ENCODE measurements at regions of chr16 and their contacts with region 1.

Region 1: GRCh38 chr16:69598045-69598444 is 32.3 kb downstream of the NFAT5 start:
- H3K4me3 ChIP-seq: no peak overlapping the region
- H3K27ac ChIP-seq: no peak overlapping the region
- H3K4me1 ChIP-seq: 0 out of 2 replicates have a peak, but pooled peaks cover 3% of the 10 kb centered on the region
- CTCF ChIP-seq: no peak

Region 2: GRCh38 chr16:69610356-69610755 is 12.3 kb after region 1 on chr16:
- CTCF ChIA-PET with region 1: no interaction called
- POLR2A ChIA-PET with region 1: no interaction called
- H3K4me3 ChIP-seq: no peak overlapping the region
- H3K27ac ChIP-seq: no peak overlapping the region
- H3K4me1 ChIP-seq: peaks cover 25% of the 10 kb centered on the region
- CTCF ChIP-seq: no peak

Region 3: GRCh38 chr16:69654307-69654931 is 56.4 kb after region 1 on chr16:
- CTCF ChIA-PET with region 1: no interaction called
- POLR2A ChIA-PET with region 1: no interaction called
- H3K4me3 ChIP-seq: no peak overlapping the region
- H3K27ac ChIP-seq: no peak overlapping the region
- H3K4me1 ChIP-seq: no peaks in the 10 kb centered on the region
- CTCF ChIP-seq: no peak

Region 4: GRCh38 chr16:69672998-69673713 is 75.1 kb after region 1 on chr16:
- CTCF ChIA-PET with region 1: no interaction called
- POLR2A ChIA-PET with region 1: interaction called, 11 read pairs
- H3K4me3 ChIP-seq: no peak overlapping the region
- H3K27ac ChIP-seq: no peak overlapping the region
- H3K4me1 ChIP-seq: peaks cover 7% of the 10 kb centered on the region; the same call in 1 of the 2 replicates
- CTCF ChIP-seq: no peak